ENCODE measurements at regions of chr2 and their contacts with region 1.

Region 1: GRCh38 chr2:85538486-85539360 is at the start of gene MAT2A:
- DNase-seq: peak; percentile 93
- ATAC-seq: peak; percentile 79
- H3K4me3 Mint-ChIP-seq: peak within 1 kb of the TSS; percentile 95
- H3K27ac Mint-ChIP-seq: peak within 1 kb of the TSS; percentile 99
- H3K4me1 Mint-ChIP-seq: peaks cover 43% of the 10 kb centered on the region
- H3K27me3 Mint-ChIP-seq: no peaks in the 10 kb centered on the region
- total RNA-seq, gene MAT2A: 226 to 259 TPM

Region 2: GRCh38 chr2:84970868-84971509 is 567.7 kb before region 1 on chr2 and contains the start of gene KCMF1:
- CTCF ChIA-PET with region 1: no interaction called
- POLR2A ChIA-PET with region 1: no interaction called
- intact Hi-C with region 1: loop called in 1 of 2 experiments (anchors 5 kb)
- DNase-seq: peak; percentile 83
- ATAC-seq: peak; percentile 69
- H3K4me3 Mint-ChIP-seq: peak within 1 kb of the TSS; percentile 98
- H3K27ac Mint-ChIP-seq: peak within 1 kb of the TSS; percentile 100
- H3K4me1 Mint-ChIP-seq: peaks cover 38% of the 10 kb centered on the region
- H3K27me3 Mint-ChIP-seq: no peaks in the 10 kb centered on the region
- total RNA-seq, gene KCMF1: 78.1 to 98.5 TPM

Region 3: GRCh38 chr2:85409845-85410583 is 128.7 kb before region 1 on chr2 and contains the start of gene CAPG:
- CTCF ChIA-PET with region 1: no interaction called
- POLR2A ChIA-PET with region 1: interaction called, 4 read pairs
- intact Hi-C with region 1: loop called in 1 of 2 experiments (anchors 1 kb)
- DNase-seq: peak; percentile 65
- ATAC-seq: peak; percentile 10
- H3K4me3 Mint-ChIP-seq: peak within 1 kb of the TSS; percentile 60
- H3K27ac Mint-ChIP-seq: peak within 1 kb of the TSS; percentile 51
- H3K4me1 Mint-ChIP-seq: peaks cover 59% of the 10 kb centered on the region
- H3K27me3 Mint-ChIP-seq: no peaks in the 10 kb centered on the region
- total RNA-seq, gene CAPG: 28.3 to 45.6 TPM

Region 4: DNA sequence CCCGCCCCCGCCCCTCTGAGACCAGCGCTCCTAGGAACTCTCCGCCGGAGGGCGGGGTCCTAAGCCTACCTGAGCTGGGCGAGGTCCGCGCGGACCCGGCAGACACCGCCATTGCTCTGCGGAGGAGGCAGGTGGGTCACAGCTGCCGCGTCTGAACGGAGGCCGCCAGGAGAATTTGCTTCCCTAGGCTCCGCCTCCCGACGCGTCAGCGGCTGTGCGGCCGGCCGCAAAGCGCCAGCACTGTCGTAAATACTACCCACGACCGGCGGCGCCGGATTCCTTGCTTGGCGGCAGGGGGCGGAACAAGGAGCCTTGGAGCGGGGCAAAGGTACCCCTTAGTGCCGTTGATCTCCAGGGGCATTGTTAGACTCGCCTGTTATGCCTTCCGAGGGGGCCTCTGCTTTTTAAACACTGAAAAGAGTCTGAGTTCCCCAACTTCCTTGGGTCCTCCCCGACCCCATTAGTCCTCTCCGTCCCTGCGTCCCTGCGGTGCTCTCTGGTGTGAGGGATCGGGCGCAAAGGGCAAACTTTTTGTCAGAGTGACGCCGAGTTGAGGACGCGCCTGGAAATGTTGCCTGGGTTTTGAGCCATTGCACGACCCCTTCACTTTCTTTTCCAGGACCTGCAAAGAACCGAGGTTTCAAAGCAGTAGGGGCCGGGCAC is 22.7 kb after region 1 on chr2 and contains the start of gene GGCX:
- CTCF ChIA-PET with region 1: interaction called, 7 read pairs
- POLR2A ChIA-PET with region 1: interaction called, 17 read pairs
- intact Hi-C with region 1: loop called (anchors 1 kb)
- DNase-seq: peak; percentile 98
- ATAC-seq: peak; percentile 94
- H3K4me3 Mint-ChIP-seq: peak within 1 kb of the TSS; percentile 95
- H3K27ac Mint-ChIP-seq: peak within 1 kb of the TSS; percentile 93
- H3K4me1 Mint-ChIP-seq: peaks cover 33% of the 10 kb centered on the region
- H3K27me3 Mint-ChIP-seq: no peaks in the 10 kb centered on the region
- total RNA-seq, gene GGCX: 20.1 to 22.2 TPM

Region 5: GRCh38 chr2:86105252-86105968 is 566.7 kb after region 1 on chr2 and contains the start of gene POLR1A:
- CTCF ChIA-PET with region 1: no interaction called
- POLR2A ChIA-PET with region 1: no interaction called
- intact Hi-C with region 1: loop called in 1 of 2 experiments (anchors 1 kb)
- DNase-seq: peak; percentile 90
- ATAC-seq: peak; percentile 75
- H3K4me3 Mint-ChIP-seq: peak within 1 kb of the TSS; percentile 88
- H3K27ac Mint-ChIP-seq: peak within 1 kb of the TSS; percentile 99
- H3K4me1 Mint-ChIP-seq: peaks cover 54% of the 10 kb centered on the region
- H3K27me3 Mint-ChIP-seq: no peaks in the 10 kb centered on the region
- total RNA-seq, gene POLR1A: 38.1 to 45.5 TPM

Measured in activated CD4-positive, alpha-beta T cell treated with anti-CD3 and anti-CD28 coated beads for 36 hours (primary cell).